ENCODE measurements at regions of chr5 and their contacts with region 1.

Region 1: DNA sequence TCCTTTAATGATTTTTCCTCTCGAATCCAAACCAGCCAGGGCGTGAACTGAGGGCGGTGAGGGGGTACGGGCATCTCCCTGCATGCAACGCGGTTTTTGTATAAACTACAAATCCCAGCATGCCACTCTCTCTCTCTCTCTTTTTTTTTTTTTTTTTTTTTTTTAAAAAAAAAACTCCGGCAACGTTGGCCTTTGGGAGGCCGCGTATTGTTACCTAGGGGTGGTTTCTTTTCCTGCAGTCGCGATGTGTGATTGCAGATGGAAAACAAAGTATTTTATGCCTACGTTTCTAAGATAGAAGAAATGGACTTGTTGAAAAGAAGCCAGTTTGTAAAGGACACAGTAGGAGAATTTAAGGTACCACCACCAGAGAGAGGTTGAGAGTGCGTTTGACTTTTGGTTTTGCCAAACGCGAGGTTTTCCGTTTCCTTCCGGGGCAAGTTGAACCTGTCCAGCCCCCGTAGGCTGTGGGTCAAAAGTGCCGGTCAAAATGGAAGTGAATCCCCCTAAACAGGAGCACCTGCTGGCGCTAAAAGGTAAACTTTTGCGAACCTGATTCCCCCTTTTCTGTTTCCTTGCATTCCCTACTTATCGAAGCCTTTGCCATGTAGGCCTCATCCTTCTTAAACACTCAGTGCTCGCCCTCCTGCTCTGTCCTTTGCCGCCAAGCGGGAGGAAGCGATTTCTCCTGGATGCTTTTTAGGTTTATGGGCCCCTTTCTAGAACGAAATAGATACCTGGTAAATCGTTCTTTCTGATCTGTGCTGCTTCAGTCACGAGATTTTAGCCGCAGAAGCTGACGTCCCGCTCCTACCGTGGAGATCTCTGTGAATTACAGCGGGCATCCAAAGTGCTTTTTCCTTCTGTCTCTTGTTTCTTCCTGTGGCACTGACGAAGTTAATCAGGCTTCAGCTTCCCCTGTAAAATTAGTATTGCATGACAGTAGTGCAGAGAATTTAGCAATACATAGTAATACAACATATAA is at the starts of genes SHLD3 and TRAPPC13:
- DNase-seq: peak; percentile 86
- H3K4me3 Mint-ChIP-seq: peak within 1 kb of the TSS; percentile 92
- H3K27ac Mint-ChIP-seq: peak within 1 kb of the TSS; percentile 94
- H3K4me1 Mint-ChIP-seq: peaks cover 44% of the 10 kb centered on the region
- H3K27me3 Mint-ChIP-seq: no peaks in the 10 kb centered on the region
- total RNA-seq, gene SHLD3: 3.6 to 4.3 TPM
- total RNA-seq, gene TRAPPC13: 21.2 to 23.3 TPM

Region 2: DNA sequence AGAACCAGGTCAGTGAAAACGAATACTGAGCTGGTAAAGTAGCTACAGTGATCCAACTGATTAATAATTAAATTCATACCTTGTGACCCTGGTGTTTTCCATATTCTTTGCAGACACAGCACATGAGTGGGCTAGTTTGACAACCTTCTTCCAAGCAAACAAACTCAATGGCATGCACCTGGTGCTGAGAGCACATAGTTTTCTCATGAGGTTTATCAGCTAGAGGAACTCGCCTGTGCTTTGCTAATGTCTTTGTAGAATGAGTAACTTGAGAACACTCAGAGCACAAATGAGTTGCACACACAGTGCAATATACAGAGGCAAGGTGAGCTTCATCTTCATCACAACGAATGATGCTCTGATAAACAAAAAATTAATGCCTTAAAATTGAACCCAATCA is 13.3 kb before region 1 on chr5:
- CTCF ChIA-PET with region 1: interaction called, 3 read pairs
- POLR2A ChIA-PET with region 1: interaction called, 19 read pairs
- DNase-seq: no peak
- H3K4me3 Mint-ChIP-seq: no peak overlapping the region
- H3K27ac Mint-ChIP-seq: no peak overlapping the region
- H3K4me1 Mint-ChIP-seq: no peaks in the 10 kb centered on the region
- H3K27me3 Mint-ChIP-seq: no peaks in the 10 kb centered on the region

Region 3: GRCh38 chr5:65682148-65682547 is 57.3 kb after region 1 on chr5:
- CTCF ChIA-PET with region 1: no interaction called
- POLR2A ChIA-PET with region 1: no interaction called
- DNase-seq: no peak
- H3K4me3 Mint-ChIP-seq: no peak overlapping the region
- H3K27ac Mint-ChIP-seq: no peak overlapping the region
- H3K4me1 Mint-ChIP-seq: no peaks in the 10 kb centered on the region
- H3K27me3 Mint-ChIP-seq: no peaks in the 10 kb centered on the region

Measured in activated CD4-positive, alpha-beta memory T cell treated with anti-CD3 and anti-CD28 coated beads, Interleukin-2, amount 10 ng/mL, durations not matched to agents 7 days and 5 days (primary cell).